Mammary epithelial cell (primary cell): ENCODE measurements at regions of chr4 and their contacts with region 1.

Region 1: DNA sequence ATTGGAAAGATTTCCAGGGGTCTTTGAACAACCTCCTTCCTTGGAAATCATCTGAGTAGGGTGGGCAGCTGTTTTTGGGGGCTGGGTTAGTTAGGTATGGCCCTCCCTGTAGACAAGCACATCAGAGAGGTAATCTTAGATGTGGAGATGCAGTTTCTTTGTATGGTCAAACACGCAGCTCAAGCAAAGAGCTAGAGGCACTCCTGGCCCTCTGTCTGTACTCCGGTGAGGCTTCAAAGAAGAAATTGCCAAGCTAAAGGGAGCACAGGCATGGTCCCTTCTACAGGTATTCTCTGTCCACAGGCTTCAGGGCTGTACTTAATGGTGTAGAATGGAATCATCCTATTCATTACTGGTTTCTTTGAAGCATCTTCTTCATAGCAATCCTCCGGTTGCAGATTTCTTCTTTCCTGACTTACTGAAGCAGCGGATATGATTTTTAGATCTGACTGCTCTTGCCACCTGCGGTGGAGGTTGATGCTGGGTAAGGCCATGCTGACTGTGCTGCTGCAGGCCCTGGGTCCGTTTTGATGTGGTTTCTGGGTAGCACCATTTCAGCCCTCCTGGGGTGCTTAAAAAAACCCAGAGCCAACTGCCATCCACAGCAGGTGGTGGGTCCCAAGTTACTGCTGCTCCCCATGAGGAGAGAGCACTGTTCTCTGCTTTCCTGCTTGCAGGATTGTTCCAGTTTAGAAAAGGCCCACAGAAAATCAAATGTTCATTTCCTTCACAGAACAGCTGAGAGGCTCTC is 318.9 kb upstream of the GATB start:
- DNase-seq: no peak
- H3K4me3 ChIP-seq: no peak overlapping the region
- H3K27ac ChIP-seq: no peak overlapping the region
- H3K4me1 ChIP-seq: no peaks in the 10 kb centered on the region
- H3K27me3 ChIP-seq: no peaks in the 10 kb centered on the region
- CTCF ChIP-seq: no peak

Region 2: GRCh38 chr4:151658959-151659600 is 420.6 kb before region 1 on chr4:
- CTCF ChIA-PET with region 1: no interaction called
- dilution Hi-C with region 1: no loop called
- in situ Hi-C with region 1: no loop called
- intact Hi-C with region 1: no loop called
- DNase-seq: no peak
- H3K4me3 ChIP-seq: no peak overlapping the region
- H3K27ac ChIP-seq: no peak overlapping the region
- H3K4me1 ChIP-seq: no peaks in the 10 kb centered on the region
- H3K27me3 ChIP-seq: no peaks in the 10 kb centered on the region
- CTCF ChIP-seq: no peak

Region 3: GRCh38 chr4:151990201-151990600 is 89.5 kb before region 1 on chr4:
- CTCF ChIA-PET with region 1: no interaction called
- dilution Hi-C with region 1: no loop called
- in situ Hi-C with region 1: no loop called
- intact Hi-C with region 1: no loop called
- DNase-seq: peak; percentile 91
- H3K4me3 ChIP-seq: no peak overlapping the region
- H3K27ac ChIP-seq: peak overlapping the region; percentile 49
- H3K4me1 ChIP-seq: peaks cover 27% of the 10 kb centered on the region
- H3K27me3 ChIP-seq: no peaks in the 10 kb centered on the region
- CTCF ChIP-seq: no peak

Region 4: DNA sequence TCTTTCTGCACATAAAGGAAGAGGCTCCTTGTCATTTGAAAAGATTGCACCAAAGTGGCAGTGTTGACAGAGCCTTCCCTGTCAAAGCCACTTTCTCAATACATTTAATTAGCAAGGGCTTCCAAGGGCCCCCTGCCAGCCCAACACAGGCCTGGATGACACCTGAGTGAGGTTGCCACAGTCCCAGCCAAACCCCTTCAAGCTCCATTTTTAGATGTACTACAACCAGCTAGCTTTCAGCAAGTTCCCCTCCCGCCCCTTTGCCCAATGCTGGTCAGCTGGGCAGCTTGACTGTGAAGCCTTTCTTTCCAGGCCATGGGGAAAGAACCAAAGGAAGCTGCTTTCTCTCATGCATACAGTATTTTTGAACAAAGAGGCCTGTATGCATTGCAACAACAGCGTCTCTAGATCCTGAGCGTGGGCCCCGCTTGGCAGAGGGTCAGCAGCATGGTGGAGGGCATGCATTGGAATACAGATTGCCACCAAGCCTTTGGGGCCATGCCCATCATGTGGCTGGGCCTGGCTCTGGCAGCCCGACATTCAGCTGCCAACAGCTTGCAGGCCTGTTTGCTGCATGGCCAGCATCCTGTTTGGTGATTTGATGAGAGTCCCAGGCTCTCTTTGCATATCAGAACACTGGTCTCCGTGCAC is 57.8 kb before region 1 on chr4:
- CTCF ChIA-PET with region 1: no interaction called
- dilution Hi-C with region 1: loop called (anchors 5 kb)
- in situ Hi-C with region 1: no loop called
- intact Hi-C with region 1: no loop called
- DNase-seq: no peak
- H3K4me3 ChIP-seq: no peak overlapping the region
- H3K27ac ChIP-seq: no peak overlapping the region
- H3K4me1 ChIP-seq: no peaks in the 10 kb centered on the region
- H3K27me3 ChIP-seq: peaks cover 2% of the 10 kb centered on the region
- CTCF ChIP-seq: no peak